ENCODE measurements at regions of chr1 and their contacts with region 1.

Region 1: GRCh38 chr1:206658264-206658980 is 23.1 kb downstream of the DYRK3 start:
- DNase-seq: no peak
- ATAC-seq: peak; percentile 93
- H3K4me3 ChIP-seq: no peak overlapping the region
- H3K27ac ChIP-seq: no peak overlapping the region
- H3K4me1 ChIP-seq: peaks cover 9% of the 10 kb centered on the region
- H3K27me3 ChIP-seq: no peaks in the 10 kb centered on the region
- CTCF ChIP-seq: peak; percentile 74 to 99 (median 98)
- EP300 ChIP-seq: no peak
- POLR2A ChIP-seq: no peak
- RAD21 ChIP-seq: peak; percentile 62

Region 2: GRCh38 chr1:206674745-206675175 is 16.3 kb after region 1 on chr1:
- CTCF ChIA-PET with region 1: interaction called, 95 read pairs
- POLR2A ChIA-PET with region 1: interaction called, 12 read pairs
- RAD21 ChIA-PET with region 1: interaction called, 33 read pairs
- SMC1A ChIA-PET with region 1: interaction called, 69 read pairs
- in situ Hi-C with region 1: no loop called
- intact Hi-C with region 1: no loop called
- DNase-seq: no peak
- ATAC-seq: no peak
- H3K4me3 ChIP-seq: no peak overlapping the region
- H3K27ac ChIP-seq: no peak overlapping the region
- H3K4me1 ChIP-seq: peaks cover 51% of the 10 kb centered on the region
- H3K27me3 ChIP-seq: no peaks in the 10 kb centered on the region
- CTCF ChIP-seq: no peak
- EP300 ChIP-seq: no peak
- POLR2A ChIP-seq: no peak
- RAD21 ChIP-seq: no peak

Region 3: GRCh38 chr1:206823727-206824126 is 165.3 kb after region 1 on chr1:
- CTCF ChIA-PET with region 1: no interaction called
- POLR2A ChIA-PET with region 1: no interaction called
- RAD21 ChIA-PET with region 1: no interaction called
- SMC1A ChIA-PET with region 1: no interaction called
- in situ Hi-C with region 1: no loop called
- intact Hi-C with region 1: no loop called
- DNase-seq: no peak
- ATAC-seq: no peak
- H3K4me3 ChIP-seq: no peak overlapping the region
- H3K27ac ChIP-seq: no peak overlapping the region
- H3K4me1 ChIP-seq: peaks cover 11% of the 10 kb centered on the region
- H3K27me3 ChIP-seq: no peaks in the 10 kb centered on the region
- CTCF ChIP-seq: no peak
- EP300 ChIP-seq: no peak
- POLR2A ChIP-seq: no peak
- RAD21 ChIP-seq: no peak

Region 4: DNA sequence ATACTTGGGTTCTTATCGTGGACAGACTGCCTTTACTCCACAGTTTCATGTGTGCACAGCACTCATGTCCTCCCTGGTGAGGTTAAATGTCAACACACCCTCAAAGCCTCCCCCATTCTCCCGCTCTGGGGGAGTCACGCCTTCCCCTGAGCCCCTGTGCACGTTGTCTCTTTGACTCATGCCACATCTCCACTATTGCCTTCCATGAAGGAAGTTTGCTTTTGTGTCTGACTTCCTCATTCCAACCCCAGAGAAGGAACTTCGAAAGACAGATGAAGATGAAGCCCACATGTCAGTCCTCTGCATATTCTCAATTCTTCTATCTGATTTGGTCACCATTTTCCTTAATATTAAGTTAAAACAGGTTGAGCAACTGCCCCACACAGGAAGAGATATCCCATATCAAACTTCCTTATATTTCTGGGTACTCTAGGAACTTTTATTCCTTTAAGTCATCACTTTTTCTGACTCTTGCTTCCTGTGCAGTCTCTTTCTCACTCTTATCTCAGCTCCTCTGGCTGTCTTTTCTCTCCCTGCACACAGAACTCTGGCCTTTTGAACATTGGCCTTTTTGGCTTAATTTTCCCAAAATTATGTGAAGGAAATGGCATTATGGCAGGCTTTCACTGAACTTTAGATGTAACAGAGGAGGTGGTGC is 487.1 kb after region 1 on chr1:
- CTCF ChIA-PET with region 1: no interaction called
- POLR2A ChIA-PET with region 1: no interaction called
- RAD21 ChIA-PET with region 1: no interaction called
- SMC1A ChIA-PET with region 1: no interaction called
- in situ Hi-C with region 1: no loop called
- intact Hi-C with region 1: no loop called
- DNase-seq: no peak
- ATAC-seq: no peak
- H3K4me3 ChIP-seq: no peak overlapping the region
- H3K27ac ChIP-seq: no peak overlapping the region
- H3K4me1 ChIP-seq: no peaks in the 10 kb centered on the region
- H3K27me3 ChIP-seq: no peaks in the 10 kb centered on the region; a peak in 1 of 4 replicates
- CTCF ChIP-seq: no peak
- EP300 ChIP-seq: no peak
- POLR2A ChIP-seq: no peak
- RAD21 ChIP-seq: no peak